H1 (cell line): ENCODE measurements at regions of chr1 and their contacts with region 1.

Region 1: GRCh38 chr1:68162761-68163160 is 69.6 kb downstream of the WLS start:
- DNase-seq: peak in 1 of 2 experiments; percentile 76
- H3K4me3 ChIP-seq: no peak overlapping the region
- H3K27ac ChIP-seq: no peak overlapping the region
- H3K4me1 ChIP-seq: no peaks in the 10 kb centered on the region
- H3K27me3 ChIP-seq: no peaks in the 10 kb centered on the region
- CTCF ChIP-seq: peak; percentile 56 to 76 (median 70)
- EP300 ChIP-seq: no peak
- POLR2A ChIP-seq: no peak
- RAD21 ChIP-seq: peak; percentile 59 to 68

Region 2: GRCh38 chr1:67970088-67970487 is 192.7 kb before region 1 on chr1:
- CTCF ChIA-PET with region 1: no interaction called
- POLR2A ChIA-PET with region 1: no interaction called
- DNase-seq: no peak
- H3K4me3 ChIP-seq: no peak overlapping the region
- H3K27ac ChIP-seq: no peak overlapping the region
- H3K4me1 ChIP-seq: no peaks in the 10 kb centered on the region
- H3K27me3 ChIP-seq: no peaks in the 10 kb centered on the region
- CTCF ChIP-seq: no peak
- EP300 ChIP-seq: no peak
- POLR2A ChIP-seq: no peak
- RAD21 ChIP-seq: no peak

Region 3: GRCh38 chr1:68151690-68152089 is 11.1 kb before region 1 on chr1:
- CTCF ChIA-PET with region 1: interaction called, 19 read pairs
- POLR2A ChIA-PET with region 1: no interaction called
- DNase-seq: no peak
- H3K4me3 ChIP-seq: no peak overlapping the region
- H3K27ac ChIP-seq: no peak overlapping the region
- H3K4me1 ChIP-seq: no peaks in the 10 kb centered on the region
- H3K27me3 ChIP-seq: no peaks in the 10 kb centered on the region
- CTCF ChIP-seq: no peak
- EP300 ChIP-seq: no peak
- POLR2A ChIP-seq: no peak
- RAD21 ChIP-seq: no peak

Region 4: GRCh38 chr1:68173911-68174737 is 11.4 kb after region 1 on chr1:
- CTCF ChIA-PET with region 1: interaction called, 45 read pairs
- POLR2A ChIA-PET with region 1: no interaction called
- DNase-seq: no peak
- H3K4me3 ChIP-seq: no peak overlapping the region
- H3K27ac ChIP-seq: no peak overlapping the region
- H3K4me1 ChIP-seq: no peaks in the 10 kb centered on the region
- H3K27me3 ChIP-seq: no peaks in the 10 kb centered on the region
- CTCF ChIP-seq: no peak
- EP300 ChIP-seq: no peak
- POLR2A ChIP-seq: no peak
- RAD21 ChIP-seq: no peak